HEK293 (cell line): ENCODE measurements at regions of chr20 and their contacts with region 1.

Region 1: DNA sequence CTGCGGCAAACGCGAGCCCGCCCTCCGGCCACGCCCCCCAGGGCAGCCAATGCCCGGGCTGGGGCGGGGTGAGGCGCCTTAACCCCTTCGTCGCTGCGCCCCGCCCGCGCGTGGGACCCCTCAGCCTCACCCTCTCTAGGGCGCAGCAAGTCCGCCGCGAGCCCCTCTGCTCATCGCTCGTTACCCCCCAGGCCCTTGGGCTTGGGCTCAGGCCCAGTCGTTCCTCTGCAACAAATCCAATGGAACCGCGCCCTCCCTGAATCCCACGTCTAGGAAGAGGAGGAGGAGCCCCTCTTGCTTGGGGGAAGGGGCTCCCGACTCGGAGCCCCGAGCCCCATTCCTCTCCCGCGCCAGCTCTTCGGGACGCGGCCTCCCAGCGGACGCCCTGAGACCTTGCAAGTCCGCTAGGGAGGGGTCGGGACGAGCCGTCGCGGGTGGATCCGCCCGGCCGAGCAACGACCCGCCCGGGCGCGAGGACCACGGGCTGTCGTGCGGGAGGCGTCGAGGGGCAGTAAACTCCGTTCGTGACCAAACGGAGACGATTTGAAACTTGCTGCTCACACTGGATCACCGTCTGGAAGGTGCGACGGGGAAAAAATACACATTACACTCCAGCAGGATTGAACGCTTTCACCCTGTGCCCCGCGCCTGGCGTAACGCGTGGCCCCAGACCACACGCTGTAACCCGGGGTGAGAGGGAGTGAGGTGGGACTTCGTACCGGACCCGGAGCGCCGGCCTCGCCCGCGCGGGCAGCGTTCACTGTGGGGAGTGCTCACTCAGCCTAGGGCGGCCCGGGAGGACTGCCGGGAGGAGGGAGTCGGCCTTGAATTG is 477 bp upstream of the LZTS3 start:
- H3K4me3 ChIP-seq: peak overlapping the region; percentile 61
- H3K27ac ChIP-seq: peak overlapping the region; percentile 87
- H3K4me1 ChIP-seq: peaks cover 14% of the 10 kb centered on the region
- CTCF ChIP-seq: peak; percentile 56

Region 2: GRCh38 chr20:3158968-3159431 is 14.8 kb before region 1 on chr20:
- CTCF ChIA-PET with region 1: no interaction called
- POLR2A ChIA-PET with region 1: interaction called, 10 read pairs
- H3K4me3 ChIP-seq: peak overlapping the region; percentile 92
- H3K27ac ChIP-seq: peak overlapping the region; percentile 85
- H3K4me1 ChIP-seq: peaks cover 11% of the 10 kb centered on the region
- CTCF ChIP-seq: no peak

Region 3: GRCh38 chr20:3204124-3204822 is 30.4 kb after region 1 on chr20 and contains the start of gene DDRGK1:
- CTCF ChIA-PET with region 1: interaction called, 5 read pairs
- POLR2A ChIA-PET with region 1: interaction called, 11 read pairs
- H3K4me3 ChIP-seq: peak within 1 kb of the TSS; percentile 89
- H3K27ac ChIP-seq: peak within 1 kb of the TSS; percentile 96
- H3K4me1 ChIP-seq: peaks cover 9% of the 10 kb centered on the region
- CTCF ChIP-seq: no peak

Region 4: GRCh38 chr20:3312940-3313682 is 139.3 kb after region 1 on chr20:
- CTCF ChIA-PET with region 1: interaction called, 4 read pairs
- POLR2A ChIA-PET with region 1: interaction called, 14 read pairs
- H3K4me3 ChIP-seq: no peak overlapping the region
- H3K27ac ChIP-seq: no peak overlapping the region
- H3K4me1 ChIP-seq: peaks cover 3% of the 10 kb centered on the region; the same call in 1 of the 2 replicates
- CTCF ChIP-seq: no peak